AG04450 (cell line): ENCODE measurements at regions of chr5 and their contacts with region 1.

Region 1: GRCh38 chr5:176447982-176448608 is at the start of gene FAF2:
- DNase-seq: peak; percentile 97
- H3K4me3 ChIP-seq: peak within 1 kb of the TSS; percentile 100
- H3K27ac ChIP-seq: peak within 1 kb of the TSS; percentile 92
- H3K27me3 ChIP-seq: no peaks in the 10 kb centered on the region
- CTCF ChIP-seq: peak; percentile 90
- polyA plus RNA-seq, gene FAF2: 57.1 and 68.7 TPM in 2 replicates

Region 2: DNA sequence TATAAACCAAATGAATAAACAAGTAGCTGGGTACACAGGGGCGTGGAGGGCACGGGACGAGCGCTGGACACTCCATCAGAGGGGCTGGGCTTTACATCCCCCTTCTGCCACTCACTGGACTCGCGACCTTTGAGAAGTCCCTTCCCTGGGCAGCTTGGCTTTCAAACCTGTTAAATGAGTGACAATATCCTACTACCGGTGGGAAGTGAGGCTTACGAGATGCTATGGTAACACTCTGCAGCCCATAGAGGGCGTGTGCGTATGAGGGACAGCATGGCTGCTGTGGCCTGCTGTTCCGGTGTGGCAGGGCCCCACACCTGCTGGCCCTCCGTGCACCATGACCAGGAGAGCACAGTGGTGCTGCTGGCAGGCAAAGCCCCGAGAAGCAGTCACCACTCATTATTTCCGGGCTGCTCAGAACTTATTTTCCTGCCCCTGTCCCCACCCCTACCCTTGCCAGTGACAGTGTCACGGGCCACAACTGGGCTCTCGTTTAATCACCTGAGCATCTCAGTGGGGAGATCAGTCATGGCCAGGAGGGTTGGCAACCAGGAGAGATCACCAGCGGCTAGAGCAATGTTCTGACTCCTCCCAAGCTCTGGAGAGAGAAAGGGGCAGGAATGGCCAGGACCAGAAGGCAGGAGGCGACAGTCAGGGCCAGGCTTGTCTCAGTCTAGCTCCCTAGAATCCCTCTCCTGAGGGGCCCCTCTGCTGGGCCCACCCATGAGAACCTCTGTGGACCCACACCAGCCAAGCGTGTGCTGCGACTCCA is 42.3 kb before region 1 on chr5:
- CTCF ChIA-PET with region 1: interaction called, 22 read pairs
- POLR2A ChIA-PET with region 1: interaction called, 3 read pairs
- DNase-seq: no peak
- H3K4me3 ChIP-seq: no peak overlapping the region
- H3K27ac ChIP-seq: no peak overlapping the region
- H3K27me3 ChIP-seq: no peaks in the 10 kb centered on the region
- CTCF ChIP-seq: no peak

Region 3: GRCh38 chr5:176427971-176428370 is 20.1 kb before region 1 on chr5:
- CTCF ChIA-PET with region 1: interaction called, 28 read pairs
- POLR2A ChIA-PET with region 1: no interaction called
- DNase-seq: no peak
- H3K4me3 ChIP-seq: no peak overlapping the region
- H3K27ac ChIP-seq: no peak overlapping the region
- H3K27me3 ChIP-seq: no peaks in the 10 kb centered on the region
- CTCF ChIP-seq: no peak

Region 4: DNA sequence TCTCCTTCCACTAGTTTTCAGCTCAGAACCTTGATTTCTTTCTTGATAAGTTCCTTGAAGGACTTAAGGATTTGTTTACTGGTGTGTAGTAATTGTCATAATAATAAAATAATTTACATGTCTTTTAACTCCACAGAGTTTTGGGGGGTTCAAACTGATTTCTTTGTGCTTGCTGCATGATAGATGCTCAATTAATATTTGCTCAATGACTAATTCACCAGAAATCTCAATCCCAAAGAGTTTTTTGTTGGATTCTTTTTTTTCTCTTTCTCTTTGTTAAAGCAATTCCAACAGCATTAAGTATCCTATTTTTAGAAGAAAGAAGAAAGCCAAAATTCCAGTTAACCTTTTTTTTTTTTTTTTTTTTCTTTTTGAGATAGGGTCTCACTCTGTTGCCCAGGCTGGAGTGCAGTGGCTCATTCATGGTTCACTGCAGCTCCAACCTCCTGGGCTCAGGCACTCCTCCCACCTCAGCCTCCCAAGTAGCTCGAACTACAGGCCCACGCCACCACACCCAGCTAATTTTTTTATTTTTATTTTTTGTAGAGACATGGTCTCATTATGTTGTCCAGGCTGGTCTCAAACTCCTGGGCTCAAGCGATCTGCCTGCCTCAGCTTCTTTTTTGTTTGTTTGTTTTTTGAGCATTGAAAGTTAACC is 10.9 kb after region 1 on chr5:
- CTCF ChIA-PET with region 1: interaction called, 62 read pairs
- POLR2A ChIA-PET with region 1: interaction called, 4 read pairs
- DNase-seq: no peak
- H3K4me3 ChIP-seq: no peak overlapping the region
- H3K27ac ChIP-seq: no peak overlapping the region
- H3K27me3 ChIP-seq: no peaks in the 10 kb centered on the region
- CTCF ChIP-seq: no peak

Region 5: GRCh38 chr5:176474510-176474909 is 26.4 kb after region 1 on chr5:
- CTCF ChIA-PET with region 1: interaction called, 62 read pairs
- POLR2A ChIA-PET with region 1: no interaction called
- DNase-seq: no peak
- H3K4me3 ChIP-seq: no peak overlapping the region
- H3K27ac ChIP-seq: no peak overlapping the region
- H3K27me3 ChIP-seq: no peaks in the 10 kb centered on the region
- CTCF ChIP-seq: no peak

Region 6: DNA sequence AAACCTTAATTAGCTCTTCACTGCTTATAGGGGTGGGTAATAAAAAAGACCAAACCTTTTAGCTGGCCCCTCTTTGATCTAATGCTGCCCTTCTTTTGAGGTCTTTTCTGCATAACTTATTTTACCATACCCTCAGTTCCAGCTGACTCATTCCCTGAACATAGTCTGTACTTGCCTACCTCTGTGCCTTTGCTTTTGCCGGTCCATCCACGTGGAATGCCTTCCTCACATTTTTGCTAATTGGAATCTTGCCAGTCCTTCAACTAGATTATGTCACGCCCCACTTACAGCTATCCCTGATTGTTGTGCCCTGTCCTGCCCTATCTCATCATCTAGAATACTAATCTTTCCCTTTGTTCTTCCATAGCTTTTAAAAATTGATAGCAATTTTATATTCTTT is 44.3 kb after region 1 on chr5:
- CTCF ChIA-PET with region 1: interaction called, 17 read pairs
- POLR2A ChIA-PET with region 1: no interaction called
- DNase-seq: no peak
- H3K4me3 ChIP-seq: no peak overlapping the region
- H3K27ac ChIP-seq: no peak overlapping the region
- H3K27me3 ChIP-seq: no peaks in the 10 kb centered on the region
- CTCF ChIP-seq: no peak

Region 7: GRCh38 chr5:176543428-176544173 is 95.5 kb after region 1 on chr5:
- CTCF ChIA-PET with region 1: interaction called, 41 read pairs
- POLR2A ChIA-PET with region 1: interaction called, 5 read pairs
- DNase-seq: no peak
- H3K4me3 ChIP-seq: peak overlapping the region; percentile 61
- H3K27ac ChIP-seq: no peak overlapping the region
- H3K27me3 ChIP-seq: peaks cover 3% of the 10 kb centered on the region
- CTCF ChIP-seq: no peak